ENCODE measurements at regions of chr1 and their contacts with region 1.

Region 1: DNA sequence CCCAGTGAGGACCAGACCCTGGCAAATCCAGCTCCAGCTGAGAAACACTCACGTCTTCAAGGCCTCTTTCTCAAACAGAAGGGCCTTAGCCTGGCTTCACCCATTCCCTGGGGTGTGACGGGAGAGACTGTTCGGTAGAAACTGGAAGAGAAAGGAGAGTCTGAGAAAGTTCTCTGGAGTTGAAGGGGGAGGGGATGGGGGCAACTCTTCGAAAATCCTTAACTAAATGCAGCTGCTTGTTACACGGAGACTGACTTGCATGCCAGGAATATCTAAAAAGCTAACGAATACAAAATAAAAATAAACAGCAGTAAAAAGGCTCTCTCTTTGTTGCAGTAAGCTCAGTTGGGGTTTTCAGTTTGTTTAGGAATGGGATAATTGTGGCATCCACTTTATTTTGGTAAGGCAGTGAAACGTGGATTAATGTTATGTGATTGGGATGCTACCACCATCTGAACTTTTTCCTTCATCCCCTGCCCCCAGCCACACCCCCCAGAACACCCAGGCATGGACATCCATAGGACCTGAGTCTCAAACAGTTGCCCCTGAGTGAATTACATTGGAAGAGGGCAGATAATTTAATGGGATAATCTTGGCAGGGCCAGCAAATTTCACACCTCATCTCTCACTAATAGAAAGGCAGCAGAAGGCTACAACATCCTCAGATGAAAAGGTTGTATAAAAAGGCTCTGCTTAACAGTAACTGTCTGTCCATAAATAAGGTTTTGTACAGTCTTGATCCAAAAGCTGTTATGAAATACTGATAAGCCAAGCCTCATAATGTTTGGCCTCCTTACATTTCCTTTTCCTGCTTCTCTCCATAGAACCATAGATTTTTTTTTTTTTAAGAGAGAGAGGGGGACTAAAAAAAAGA is 5.8 kb downstream of the ROR1 start:
- DNase-seq: no peak
- ATAC-seq: no peak
- H3K4me3 ChIP-seq: no peak overlapping the region
- H3K27ac ChIP-seq: peak overlapping the region in 5 of 12 donors; percentile 3 to 53 (median 15)
- H3K4me1 ChIP-seq: peaks cover 0 to 66% (median 25%) of the 10 kb centered on the region in 12 donors
- H3K27me3 ChIP-seq: peaks cover 0 to 22% (median 0%) of the 10 kb centered on the region in 9 donors
- CTCF ChIP-seq: no peak
- POLR2A ChIP-seq: no peak

Region 2: GRCh38 chr1:63747445-63747844 is 32.1 kb before region 1 on chr1:
- intact Hi-C with region 1: no loop called
- DNase-seq: peak in 2 of 5 donors; percentile 36 to 57
- ATAC-seq: peak; percentile 77 to 86 (median 80)
- H3K4me3 ChIP-seq: no peak overlapping the region
- H3K27ac ChIP-seq: peak overlapping the region in 2 of 12 donors; percentile 39 to 50
- H3K4me1 ChIP-seq: peaks cover 0 to 15% (median 4%) of the 10 kb centered on the region in 12 donors
- H3K27me3 ChIP-seq: no peaks in the 10 kb centered on the region
- CTCF ChIP-seq: no peak
- POLR2A ChIP-seq: no peak

Region 3: GRCh38 chr1:63917571-63918417 is 138.2 kb after region 1 on chr1:
- intact Hi-C with region 1: loop called in 5 of 10 experiments (anchors 5 to 10 kb)
- DNase-seq: no peak
- ATAC-seq: no peak
- H3K4me3 ChIP-seq: no peak overlapping the region
- H3K27ac ChIP-seq: no peak overlapping the region
- H3K4me1 ChIP-seq: peaks cover 0 to 72% (median 19%) of the 10 kb centered on the region in 12 donors
- H3K27me3 ChIP-seq: no peaks in the 10 kb centered on the region
- CTCF ChIP-seq: peak in 3 of 12 donors; percentile 17 to 25 (median 18)
- POLR2A ChIP-seq: no peak

Region 4: GRCh38 chr1:64124704-64125440 is 345.3 kb after region 1 on chr1:
- intact Hi-C with region 1: loop called in 6 of 10 experiments (anchors 5 to 10 kb)
- DNase-seq: no peak
- ATAC-seq: no peak
- H3K4me3 ChIP-seq: no peak overlapping the region
- H3K27ac ChIP-seq: no peak overlapping the region
- H3K4me1 ChIP-seq: peaks cover 0 to 15% (median 1%) of the 10 kb centered on the region in 12 donors
- H3K27me3 ChIP-seq: no peaks in the 10 kb centered on the region
- CTCF ChIP-seq: no peak
- POLR2A ChIP-seq: no peak

Measured in heart left ventricle (tissue), 16 donors.